ENCODE measurements at regions of chr1 and their contacts with region 1.

Region 1: DNA sequence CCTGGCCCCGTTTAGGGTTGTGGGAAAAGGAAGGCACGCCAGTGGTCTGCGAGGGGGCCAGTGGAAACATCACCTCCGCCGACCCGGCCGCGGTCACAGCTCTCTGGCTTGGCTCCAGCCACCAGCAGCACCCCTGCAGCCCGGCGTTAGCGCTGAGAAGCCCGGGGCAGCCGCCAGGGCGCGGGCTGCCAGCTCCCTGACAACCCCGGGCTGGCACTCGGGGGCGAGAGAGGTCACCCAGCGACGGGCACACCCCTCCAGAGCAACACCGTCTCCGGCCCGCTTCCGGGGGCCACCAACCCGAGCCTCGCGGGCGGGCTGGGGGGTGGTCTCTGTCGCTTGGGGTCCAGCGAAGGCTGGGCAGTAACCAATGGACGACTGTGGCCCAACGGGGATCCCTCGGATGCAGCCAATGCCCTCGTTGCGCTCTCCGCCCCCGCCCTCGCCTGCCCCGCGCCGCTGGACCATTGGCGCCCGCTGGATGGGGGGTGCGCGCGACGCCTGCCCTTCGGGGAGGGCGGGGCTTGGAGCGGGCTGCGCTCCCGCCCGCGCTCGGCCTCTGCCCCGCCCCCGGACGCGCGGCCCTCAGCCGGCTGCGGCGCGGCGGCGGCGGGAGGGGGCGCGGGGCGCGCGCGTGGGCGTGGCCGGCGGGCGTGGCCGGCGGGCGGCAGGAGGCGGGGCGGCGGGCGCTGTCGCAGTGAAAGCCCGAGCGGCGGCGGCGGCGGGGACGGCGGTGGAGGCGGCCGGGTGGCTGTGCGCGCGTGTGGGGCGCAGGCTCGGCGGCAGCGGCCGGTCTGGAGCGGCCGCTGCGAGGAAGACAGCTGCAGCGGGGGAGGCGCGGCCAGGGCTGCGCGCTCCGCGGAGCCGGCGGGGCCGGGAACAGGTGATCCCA is at the start of gene MAN1C1:
- DNase-seq: no peak
- H3K4me3 ChIP-seq: peak within 1 kb of the TSS; percentile 65 to 77
- H3K27ac ChIP-seq: peak within 1 kb of the TSS; percentile 89
- H3K4me1 ChIP-seq: peaks cover 46% of the 10 kb centered on the region
- H3K27me3 ChIP-seq: no peaks in the 10 kb centered on the region
- CTCF ChIP-seq: peak in 1 of 3 experiments; percentile 31
- POLR2A ChIP-seq: peak in 1 of 2 donors; percentile 71
- total RNA-seq, gene MAN1C1: 31.4 TPM

Region 2: GRCh38 chr1:25743826-25744581 is 127.7 kb after region 1 on chr1:
- intact Hi-C with region 1: loop called (anchors 5 kb)
- DNase-seq: no peak
- H3K4me3 ChIP-seq: peak overlapping the region in 1 of 2 donors; percentile 18
- H3K27ac ChIP-seq: peak overlapping the region; percentile 90
- H3K4me1 ChIP-seq: peaks cover 66% of the 10 kb centered on the region
- H3K27me3 ChIP-seq: no peaks in the 10 kb centered on the region
- CTCF ChIP-seq: peak in 2 of 3 experiments; percentile 39 to 43
- POLR2A ChIP-seq: no peak

Region 3: GRCh38 chr1:26035959-26036755 is 419.8 kb after region 1 on chr1:
- intact Hi-C with region 1: no loop called
- DNase-seq: no peak
- H3K4me3 ChIP-seq: peak overlapping the region; percentile 75 to 79
- H3K27ac ChIP-seq: peak overlapping the region; percentile 85
- H3K4me1 ChIP-seq: peaks cover 13% of the 10 kb centered on the region
- H3K27me3 ChIP-seq: no peaks in the 10 kb centered on the region
- CTCF ChIP-seq: peak; percentile 98 to 99 (median 98)
- POLR2A ChIP-seq: no peak

Measured in vagina (tissue), 2 donors.